Aorta (tissue), 5 donors: ENCODE measurements at regions of chrX and their contacts with region 1.

Region 1: GRCh38 chrX:19334945-19335626 is 8.6 kb upstream of the PDHA1 start:
- DNase-seq: no peak
- ATAC-seq: no peak
- H3K4me3 ChIP-seq: no peak overlapping the region
- H3K27ac ChIP-seq: no peak overlapping the region
- H3K4me1 ChIP-seq: no peaks in the 10 kb centered on the region
- H3K27me3 ChIP-seq: no peaks in the 10 kb centered on the region

Region 2: GRCh38 chrX:18390941-18391538 is 944.0 kb before region 1 on chrX:
- intact Hi-C with region 1: loop called (anchors 2 to 5 kb)
- DNase-seq: peak; percentile 69 to 83
- ATAC-seq: peak; percentile 79
- H3K4me3 ChIP-seq: no peak overlapping the region
- H3K27ac ChIP-seq: no peak overlapping the region
- H3K4me1 ChIP-seq: no peaks in the 10 kb centered on the region
- H3K27me3 ChIP-seq: no peaks in the 10 kb centered on the region

Region 3: GRCh38 chrX:18899796-18900447 is 435.2 kb before region 1 on chrX:
- intact Hi-C with region 1: loop called in 1 of 2 experiments (anchors 10 kb)
- DNase-seq: peak in 1 of 2 donors; percentile 69
- ATAC-seq: no peak
- H3K4me3 ChIP-seq: no peak overlapping the region
- H3K27ac ChIP-seq: no peak overlapping the region
- H3K4me1 ChIP-seq: no peaks in the 10 kb centered on the region
- H3K27me3 ChIP-seq: no peaks in the 10 kb centered on the region

Region 4: DNA sequence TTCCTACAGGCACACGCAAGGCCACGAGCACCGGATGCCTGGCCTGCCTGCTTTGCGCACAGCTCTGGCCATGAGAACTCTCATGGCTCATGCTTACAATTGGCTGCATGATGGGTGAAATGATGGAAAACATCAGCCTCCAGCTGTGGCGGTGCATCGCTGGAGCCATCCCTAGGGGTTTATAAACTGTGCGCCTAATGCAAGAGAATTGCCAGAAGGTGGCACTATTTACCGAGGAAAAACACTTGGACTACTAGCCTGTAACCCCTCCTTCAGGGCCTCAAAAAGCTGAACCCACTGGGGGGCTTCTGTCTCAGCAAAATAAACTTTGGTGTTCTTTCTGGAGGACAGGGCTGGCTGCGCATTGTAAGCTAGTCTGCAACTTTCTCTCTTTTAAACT is 403.1 kb before region 1 on chrX:
- intact Hi-C with region 1: loop called (anchors 5 kb)
- DNase-seq: no peak
- ATAC-seq: no peak
- H3K4me3 ChIP-seq: no peak overlapping the region
- H3K27ac ChIP-seq: no peak overlapping the region
- H3K4me1 ChIP-seq: no peaks in the 10 kb centered on the region
- H3K27me3 ChIP-seq: no peaks in the 10 kb centered on the region

Region 5: GRCh38 chrX:18983666-18984380 is 351.3 kb before region 1 on chrX and contains the start of gene PHKA2:
- intact Hi-C with region 1: no loop called
- DNase-seq: peak; percentile 71 to 90
- ATAC-seq: peak; percentile 87
- H3K4me3 ChIP-seq: peak within 1 kb of the TSS; percentile 34 to 99
- H3K27ac ChIP-seq: peak within 1 kb of the TSS in 1 of 2 donors; percentile 92
- H3K4me1 ChIP-seq: no peaks in the 10 kb centered on the region
- H3K27me3 ChIP-seq: no peaks in the 10 kb centered on the region
- total RNA-seq, gene PHKA2: 25.5 to 30.2 TPM

Region 6: GRCh38 chrX:19017271-19017670 is 317.8 kb before region 1 on chrX:
- intact Hi-C with region 1: loop called in 1 of 2 experiments (anchors 10 kb)
- DNase-seq: no peak
- ATAC-seq: no peak
- H3K4me3 ChIP-seq: no peak overlapping the region
- H3K27ac ChIP-seq: no peak overlapping the region
- H3K4me1 ChIP-seq: no peaks in the 10 kb centered on the region
- H3K27me3 ChIP-seq: no peaks in the 10 kb centered on the region

Region 7: GRCh38 chrX:19040373-19040772 is 294.7 kb before region 1 on chrX:
- intact Hi-C with region 1: loop called in 1 of 2 experiments (anchors 2 kb)
- DNase-seq: no peak
- ATAC-seq: no peak
- H3K4me3 ChIP-seq: no peak overlapping the region
- H3K27ac ChIP-seq: no peak overlapping the region
- H3K4me1 ChIP-seq: no peaks in the 10 kb centered on the region
- H3K27me3 ChIP-seq: no peaks in the 10 kb centered on the region